Esophagus muscularis mucosa (tissue), 4 donors: ENCODE measurements at regions of chr19 and their contacts with region 1.

Region 1: DNA sequence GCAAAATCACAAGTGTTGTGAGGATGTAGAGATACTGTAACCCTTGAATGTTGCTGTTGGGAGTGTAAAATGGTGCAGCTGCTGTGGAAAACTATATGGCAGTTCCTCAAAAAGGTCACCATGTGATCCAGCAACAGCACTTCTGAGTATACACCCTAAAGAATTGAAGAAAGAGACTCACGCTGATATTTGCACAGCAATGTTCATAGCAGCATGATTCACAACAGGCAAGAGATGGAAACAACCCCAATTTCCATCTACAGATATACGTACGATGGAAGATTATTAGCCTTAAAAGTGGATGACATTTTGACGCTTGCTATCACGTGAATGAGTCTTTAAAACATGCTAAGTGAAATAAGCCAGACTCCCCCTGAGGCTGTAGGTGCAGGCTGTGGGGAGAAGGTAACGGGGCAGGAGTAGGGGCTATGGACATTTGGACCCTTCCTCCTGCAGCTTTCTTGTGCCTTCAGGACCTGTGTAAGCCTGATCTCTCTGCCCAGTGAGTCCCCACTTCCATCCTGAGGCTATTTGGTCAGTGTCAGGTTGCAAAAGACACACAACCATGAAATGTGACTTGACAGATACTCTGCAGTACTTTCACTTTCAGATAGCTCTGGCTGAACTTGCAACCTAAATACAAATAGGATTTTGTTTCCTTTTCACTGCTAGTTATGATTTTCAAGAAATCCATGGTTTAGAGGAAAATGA is 17.6 kb upstream of the EID2 start:
- DNase-seq: peak; percentile 37
- H3K4me3 ChIP-seq: no peak overlapping the region
- H3K27ac ChIP-seq: no peak overlapping the region
- H3K4me1 ChIP-seq: peaks cover 0 to 9% (median 4%) of the 10 kb centered on the region in 4 donors
- H3K27me3 ChIP-seq: peaks cover 0 to 10% (median 0%) of the 10 kb centered on the region in 4 donors
- CTCF ChIP-seq: no peak
- EP300 ChIP-seq: no peak
- POLR2A ChIP-seq: no peak

Region 2: DNA sequence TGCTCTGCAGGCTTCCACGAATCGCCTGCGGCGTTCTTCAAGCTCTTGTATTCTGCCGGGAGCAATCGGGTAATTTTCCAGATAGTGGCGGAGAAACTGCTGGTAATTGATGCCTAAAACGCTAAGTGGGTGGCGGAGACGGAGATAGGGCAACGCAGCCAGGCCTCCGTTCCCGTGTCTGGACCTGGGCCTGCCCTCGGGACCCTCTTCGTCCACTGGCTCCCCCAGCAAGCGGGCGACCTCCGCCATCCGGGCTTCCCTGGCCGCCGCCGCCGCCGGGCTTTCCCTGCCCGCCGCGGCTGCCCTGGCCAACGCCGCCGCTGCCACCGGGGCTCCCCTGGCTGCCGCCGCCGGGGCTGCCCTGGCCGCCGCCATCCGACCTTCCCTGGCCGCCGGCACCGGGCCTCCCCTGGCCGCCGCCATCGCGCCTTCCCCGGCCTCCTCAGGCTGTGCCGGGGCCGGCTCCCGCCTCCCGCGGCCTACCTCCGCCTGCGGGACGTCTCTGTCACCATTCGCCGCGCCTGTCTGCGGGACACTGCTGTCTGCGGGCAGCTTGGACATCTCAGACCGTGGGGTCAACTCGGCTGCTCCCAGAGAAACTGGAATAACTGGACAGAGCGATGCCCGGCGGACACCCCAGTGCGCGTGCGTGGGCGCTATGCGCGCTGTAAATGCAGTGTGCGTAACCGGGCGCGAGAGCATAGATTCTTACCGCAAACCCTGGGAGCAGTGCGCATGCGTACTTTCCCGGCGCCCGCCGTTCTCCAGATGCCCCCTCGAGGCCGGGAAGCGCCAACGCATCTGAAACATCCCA is 17.9 kb before region 1 on chr19 and contains the start of gene EID2:
- intact Hi-C with region 1: no loop called
- DNase-seq: peak; percentile 98
- H3K4me3 ChIP-seq: peak within 1 kb of the TSS; percentile 75 to 98 (median 82)
- H3K27ac ChIP-seq: peak within 1 kb of the TSS; percentile 94 to 98 (median 96)
- H3K4me1 ChIP-seq: peaks cover 15 to 31% (median 28%) of the 10 kb centered on the region in 4 donors
- H3K27me3 ChIP-seq: peaks cover 0 to 4% (median 0%) of the 10 kb centered on the region in 4 donors
- CTCF ChIP-seq: peak; percentile 88 to 96 (median 89)
- EP300 ChIP-seq: no peak
- POLR2A ChIP-seq: peak; percentile 73
- total RNA-seq, gene EID2: 13.9 to 26.4 (median 18.9) TPM

Region 3: GRCh38 chr19:39671738-39672363 is 114.3 kb after region 1 on chr19:
- intact Hi-C with region 1: loop called (anchors 5 kb)
- DNase-seq: peak; percentile 72
- H3K4me3 ChIP-seq: no peak overlapping the region
- H3K27ac ChIP-seq: no peak overlapping the region
- H3K4me1 ChIP-seq: no peaks in the 10 kb centered on the region
- H3K27me3 ChIP-seq: peaks cover 0 to 17% (median 0%) of the 10 kb centered on the region in 4 donors
- CTCF ChIP-seq: peak; percentile 35 to 43 (median 36)
- EP300 ChIP-seq: no peak
- POLR2A ChIP-seq: no peak